HepG2 (cell line): ENCODE measurements at regions of chr2 and their contacts with region 1.

Region 1: GRCh38 chr2:218781691-218782527 is at the start of gene CYP27A1:
- DNase-seq: peak; percentile 83
- ATAC-seq: peak; percentile 95
- H3K4me3 ChIP-seq: peak within 1 kb of the TSS; percentile 69 to 97 (median 94)
- H3K27ac ChIP-seq: peak within 1 kb of the TSS; percentile 97
- H3K4me1 ChIP-seq: peaks cover 56% of the 10 kb centered on the region
- H3K27me3 ChIP-seq: no peaks in the 10 kb centered on the region; a peak in 1 of 5 replicates
- CTCF ChIP-seq: no peak
- EP300 ChIP-seq: peak in 1 of 2 experiments; percentile 62; a peak in 2 of 4 replicates
- POLR2A ChIP-seq: peak; percentile 77 to 90
- RAD21 ChIP-seq: peak; percentile 73
- total RNA-seq, gene CYP27A1: 106 and 157 TPM in 2 replicates

Region 2: DNA sequence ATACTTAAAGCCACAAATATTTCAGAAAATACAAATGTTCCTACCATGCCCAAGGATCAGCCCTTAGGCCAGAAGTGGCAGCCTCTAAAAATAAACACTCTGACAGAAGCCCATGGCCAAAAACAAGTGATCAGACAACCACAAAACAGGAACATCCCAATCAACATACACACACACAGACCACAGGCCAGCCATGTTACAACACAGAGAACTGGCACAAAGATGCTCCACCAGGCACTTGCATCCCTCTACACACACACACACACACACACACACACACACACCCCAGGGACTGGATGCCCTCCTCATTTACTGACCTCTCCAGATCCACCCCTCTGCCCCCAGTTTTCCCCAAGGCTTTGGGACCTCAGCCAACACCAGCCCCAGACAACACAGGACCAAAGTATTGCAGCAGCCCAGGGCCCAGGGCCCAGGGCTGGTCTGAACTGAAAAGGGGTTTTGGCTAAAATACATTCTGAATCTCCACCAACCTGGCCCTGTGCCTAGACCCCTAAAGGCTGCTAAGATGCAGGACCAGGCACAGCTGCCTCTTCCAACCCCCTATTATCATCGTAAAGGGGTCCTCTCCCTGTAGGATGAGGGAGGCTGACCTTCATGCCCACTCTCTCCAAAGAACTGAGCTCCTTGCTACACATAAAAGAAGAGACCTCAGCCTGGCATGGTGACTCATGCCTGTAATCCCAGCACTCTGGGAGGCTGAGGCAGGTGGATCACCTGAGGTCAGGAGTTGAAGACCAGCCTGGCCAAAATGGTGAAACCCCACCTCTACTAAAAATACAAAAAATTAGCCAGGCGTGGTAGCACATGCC is 930.5 kb before region 1 on chr2:
- CTCF ChIA-PET with region 1: no interaction called
- POLR2A ChIA-PET with region 1: no interaction called
- in situ Hi-C with region 1: no loop called
- intact Hi-C with region 1: no loop called
- DNase-seq: no peak
- ATAC-seq: no peak
- H3K4me3 ChIP-seq: no peak overlapping the region
- H3K27ac ChIP-seq: no peak overlapping the region
- H3K4me1 ChIP-seq: 0 out of 2 replicates have a peak, but pooled peaks cover 5% of the 10 kb centered on the region
- H3K27me3 ChIP-seq: no peaks in the 10 kb centered on the region
- CTCF ChIP-seq: no peak
- EP300 ChIP-seq: no peak
- POLR2A ChIP-seq: no peak
- RAD21 ChIP-seq: no peak

Region 3: DNA sequence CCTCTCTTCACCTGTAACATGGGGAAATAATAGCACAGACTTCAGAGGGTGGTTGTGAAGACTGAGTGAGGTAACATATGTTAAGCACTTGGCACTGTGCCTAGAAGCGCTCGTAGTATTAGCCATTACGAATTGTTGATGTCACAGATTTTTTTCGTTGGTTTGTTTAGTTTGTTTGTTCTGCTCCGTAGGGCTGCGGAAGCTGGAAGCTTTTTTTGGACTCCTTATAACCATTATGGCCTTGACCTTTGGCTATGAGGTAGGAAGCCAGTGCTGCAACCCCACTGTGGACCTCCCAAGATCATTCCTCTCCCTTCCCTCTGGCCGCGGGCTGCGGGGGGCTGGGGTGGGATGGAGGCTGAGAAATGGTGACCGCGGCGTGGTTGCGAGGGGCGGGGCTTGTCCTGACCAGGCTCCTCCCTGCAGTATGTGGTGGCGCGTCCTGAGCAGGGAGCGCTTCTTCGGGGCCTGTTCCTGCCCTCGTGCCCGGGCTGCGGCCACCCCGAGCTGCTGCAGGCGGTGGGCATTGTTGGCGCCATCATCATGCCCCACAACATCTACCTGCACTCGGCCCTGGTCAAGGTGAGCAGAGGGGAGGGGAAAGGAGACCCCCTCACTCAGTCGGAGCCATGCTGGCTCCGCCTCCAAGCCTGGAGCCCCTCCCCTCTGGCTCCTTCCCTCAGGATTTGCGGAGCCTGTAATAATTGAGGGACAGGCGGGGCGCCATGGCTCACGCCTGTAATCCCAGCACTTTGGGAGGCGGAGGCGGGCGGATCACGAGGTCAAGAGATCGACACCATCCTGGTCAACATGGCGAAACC is 394.3 kb before region 1 on chr2:
- CTCF ChIA-PET with region 1: no interaction called
- POLR2A ChIA-PET with region 1: no interaction called
- in situ Hi-C with region 1: no loop called
- intact Hi-C with region 1: no loop called
- DNase-seq: peak; percentile 86
- ATAC-seq: no peak
- H3K4me3 ChIP-seq: peak overlapping the region; percentile 9 to 57 (median 11); a peak in 3 of 6 replicates
- H3K27ac ChIP-seq: no peak overlapping the region
- H3K4me1 ChIP-seq: peaks cover 77% of the 10 kb centered on the region
- H3K27me3 ChIP-seq: peaks cover 6 to 20% of the 10 kb centered on the region in 2 experiments; a peak in 4 of 5 replicates
- CTCF ChIP-seq: no peak
- EP300 ChIP-seq: peak in 1 of 2 experiments; percentile 70; a peak in 2 of 4 replicates
- POLR2A ChIP-seq: no peak
- RAD21 ChIP-seq: no peak

Region 4: DNA sequence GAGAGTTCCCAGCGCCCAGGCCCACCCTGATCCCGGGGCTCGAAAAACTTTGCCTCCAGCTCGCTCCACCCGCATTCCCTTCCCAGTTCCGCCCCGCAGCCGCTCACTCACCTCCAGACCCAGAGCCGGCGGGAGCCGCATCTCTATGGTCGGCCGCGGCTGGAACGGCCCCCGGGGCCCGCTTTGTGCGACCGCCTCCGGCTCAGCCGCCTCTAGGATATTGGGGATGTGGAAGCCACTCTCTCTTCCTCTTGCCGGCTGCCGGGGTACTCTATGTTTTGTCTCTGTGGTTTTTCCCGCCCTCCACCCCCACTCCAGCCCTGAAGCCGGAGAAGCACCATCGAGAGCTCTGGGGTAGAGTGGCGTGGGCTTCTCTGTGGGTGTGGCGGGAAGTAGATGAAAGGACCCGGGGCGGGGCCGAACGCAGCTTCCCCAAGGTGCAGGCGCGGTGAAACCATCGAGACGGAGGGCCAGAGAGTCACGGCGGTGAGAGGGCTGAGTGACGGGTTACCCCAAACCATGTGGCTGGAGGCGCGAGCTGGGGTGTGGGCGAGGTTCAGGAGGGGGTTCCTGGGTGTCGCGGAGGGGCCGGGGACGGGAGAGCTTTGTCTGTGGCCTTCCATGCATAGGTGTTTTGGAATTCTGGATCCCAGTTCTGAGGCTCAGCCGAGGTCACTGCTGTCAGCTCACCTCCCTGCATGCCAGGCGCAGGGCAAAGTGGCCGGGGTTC is 122.5 kb before region 1 on chr2 and contains the starts of genes BCS1L and ZNF142:
- CTCF ChIA-PET with region 1: no interaction called
- POLR2A ChIA-PET with region 1: interaction called, 15 read pairs
- in situ Hi-C with region 1: no loop called
- intact Hi-C with region 1: loop called (anchors 2 kb)
- DNase-seq: peak; percentile 89
- ATAC-seq: peak; percentile 96
- H3K4me3 ChIP-seq: peak within 1 kb of the TSS; percentile 78 to 92 (median 80)
- H3K27ac ChIP-seq: peak within 1 kb of the TSS; percentile 59
- H3K4me1 ChIP-seq: peaks cover 24% of the 10 kb centered on the region
- H3K27me3 ChIP-seq: no peaks in the 10 kb centered on the region; a peak in 1 of 5 replicates
- CTCF ChIP-seq: peak; percentile 32
- EP300 ChIP-seq: peak in 1 of 2 experiments; percentile 25; a peak in 1 of 4 replicates
- POLR2A ChIP-seq: peak; percentile 66 to 93
- RAD21 ChIP-seq: peak; percentile 51
- total RNA-seq, gene BCS1L: 52.1 and 76.0 TPM in 2 replicates
- total RNA-seq, gene ZNF142: 10.4 and 11.4 TPM in 2 replicates

Region 5: GRCh38 chr2:218727502-218728165 is 54.3 kb before region 1 on chr2:
- CTCF ChIA-PET with region 1: interaction called, 7 read pairs
- POLR2A ChIA-PET with region 1: interaction called, 90 read pairs
- in situ Hi-C with region 1: no loop called
- intact Hi-C with region 1: loop called (anchors 1 kb)
- DNase-seq: peak; percentile 66
- ATAC-seq: no peak
- H3K4me3 ChIP-seq: no peak overlapping the region
- H3K27ac ChIP-seq: no peak overlapping the region
- H3K4me1 ChIP-seq: peaks cover 44% of the 10 kb centered on the region
- H3K27me3 ChIP-seq: no peaks in the 10 kb centered on the region
- CTCF ChIP-seq: peak; percentile 77
- EP300 ChIP-seq: no peak
- POLR2A ChIP-seq: no peak
- RAD21 ChIP-seq: peak; percentile 77

Region 6: DNA sequence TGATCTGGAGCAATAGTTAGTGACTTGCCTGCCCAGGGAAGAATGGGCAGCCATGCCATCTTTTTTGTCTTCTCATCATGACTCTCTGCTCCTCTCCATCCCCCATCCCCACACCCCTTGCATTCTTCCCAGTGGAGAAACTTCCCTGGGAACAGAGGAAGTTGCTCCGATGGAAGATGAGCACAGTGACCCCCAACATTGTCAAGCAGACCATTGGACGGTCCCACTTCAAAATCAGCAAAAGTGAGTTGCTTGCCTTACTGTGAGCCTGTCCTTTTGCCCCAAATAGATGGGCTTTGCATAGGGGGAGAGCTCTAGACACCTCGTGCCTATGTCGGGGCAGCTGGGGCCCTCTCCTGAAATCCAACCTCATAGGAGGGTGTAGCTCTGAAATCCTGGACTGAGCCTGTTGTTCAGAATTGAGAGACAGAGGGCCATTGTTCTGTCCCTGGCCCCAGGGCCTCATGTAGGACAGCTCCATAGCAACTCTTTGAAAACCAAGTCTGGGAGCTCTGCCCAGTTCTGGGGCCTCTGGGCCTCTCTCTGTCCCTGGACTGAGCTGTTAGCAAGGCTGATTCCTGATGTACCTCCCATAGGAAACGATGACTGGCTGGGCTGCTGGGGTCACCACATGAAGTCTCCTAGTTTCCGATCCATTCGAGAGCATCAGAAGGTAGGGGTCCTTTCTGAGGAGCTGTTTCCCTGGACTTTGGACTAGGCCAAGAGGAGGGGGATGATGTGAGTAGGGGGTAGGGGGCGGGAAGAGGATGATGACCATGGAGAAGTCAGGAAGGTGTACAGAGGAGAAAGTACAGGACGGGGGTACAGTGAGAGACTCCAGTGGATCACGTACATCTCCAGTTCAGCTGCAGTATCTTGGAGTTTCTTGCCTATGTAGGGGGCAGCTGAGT is 36.1 kb before region 1 on chr2:
- CTCF ChIA-PET with region 1: no interaction called
- POLR2A ChIA-PET with region 1: interaction called, 218 read pairs
- in situ Hi-C with region 1: no loop called
- intact Hi-C with region 1: loop called (anchors 1 kb)
- DNase-seq: peak; percentile 99
- ATAC-seq: peak; percentile 98
- H3K4me3 ChIP-seq: peak overlapping the region in 1 of 3 experiments; percentile 12; a peak in 2 of 6 replicates
- H3K27ac ChIP-seq: peak overlapping the region; percentile 95
- H3K4me1 ChIP-seq: peaks cover 67% of the 10 kb centered on the region
- H3K27me3 ChIP-seq: no peaks in the 10 kb centered on the region
- CTCF ChIP-seq: 0 out of 2 replicates have a peak, but pooled peaks have one; percentile 9
- EP300 ChIP-seq: peak; percentile 25 to 82; a peak in 3 of 4 replicates
- POLR2A ChIP-seq: peak in 1 of 2 experiments; percentile 47; a peak in 2 of 4 replicates
- RAD21 ChIP-seq: no peak; the same call in 1 of the 2 replicates

Region 7: DNA sequence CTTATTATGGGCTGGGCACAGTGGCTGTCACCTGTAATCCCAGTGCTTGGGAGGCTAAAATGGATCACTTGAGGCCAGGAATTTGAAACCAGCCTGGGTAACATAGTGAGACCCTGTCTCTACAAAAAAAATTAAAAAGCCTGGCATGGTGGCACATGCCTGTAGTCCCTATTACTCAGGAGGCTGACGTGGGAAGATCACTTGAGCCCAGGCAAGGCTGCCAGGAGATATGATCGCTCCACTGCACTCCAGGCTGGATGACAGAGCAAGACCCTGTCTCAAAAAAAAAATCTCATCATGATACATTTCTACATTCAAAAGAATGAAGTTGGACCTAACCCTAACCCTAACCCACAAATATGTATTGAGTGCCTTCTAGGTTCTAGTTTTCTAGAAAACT is 20.1 kb before region 1 on chr2:
- CTCF ChIA-PET with region 1: no interaction called
- POLR2A ChIA-PET with region 1: interaction called, 47 read pairs
- in situ Hi-C with region 1: no loop called
- intact Hi-C with region 1: no loop called
- DNase-seq: no peak
- ATAC-seq: no peak
- H3K4me3 ChIP-seq: no peak overlapping the region
- H3K27ac ChIP-seq: no peak overlapping the region
- H3K4me1 ChIP-seq: peaks cover 79% of the 10 kb centered on the region
- H3K27me3 ChIP-seq: no peaks in the 10 kb centered on the region
- CTCF ChIP-seq: no peak
- EP300 ChIP-seq: no peak
- POLR2A ChIP-seq: no peak
- RAD21 ChIP-seq: no peak

Region 8: GRCh38 chr2:218852911-218853667 is 71.2 kb after region 1 on chr2:
- CTCF ChIA-PET with region 1: interaction called, 6 read pairs
- POLR2A ChIA-PET with region 1: interaction called, 13 read pairs
- in situ Hi-C with region 1: no loop called
- intact Hi-C with region 1: no loop called
- DNase-seq: peak; percentile 61
- ATAC-seq: peak; percentile 69
- H3K4me3 ChIP-seq: no peak overlapping the region
- H3K27ac ChIP-seq: no peak overlapping the region
- H3K4me1 ChIP-seq: peaks cover 30% of the 10 kb centered on the region
- H3K27me3 ChIP-seq: peaks cover 8 to 74% of the 10 kb centered on the region in 2 experiments; a peak in 4 of 5 replicates
- CTCF ChIP-seq: peak; percentile 94
- EP300 ChIP-seq: no peak
- POLR2A ChIP-seq: no peak
- RAD21 ChIP-seq: peak; percentile 86